HepG2 (cell line): ENCODE measurements at regions of chr1 and their contacts with region 1.

Region 1: DNA sequence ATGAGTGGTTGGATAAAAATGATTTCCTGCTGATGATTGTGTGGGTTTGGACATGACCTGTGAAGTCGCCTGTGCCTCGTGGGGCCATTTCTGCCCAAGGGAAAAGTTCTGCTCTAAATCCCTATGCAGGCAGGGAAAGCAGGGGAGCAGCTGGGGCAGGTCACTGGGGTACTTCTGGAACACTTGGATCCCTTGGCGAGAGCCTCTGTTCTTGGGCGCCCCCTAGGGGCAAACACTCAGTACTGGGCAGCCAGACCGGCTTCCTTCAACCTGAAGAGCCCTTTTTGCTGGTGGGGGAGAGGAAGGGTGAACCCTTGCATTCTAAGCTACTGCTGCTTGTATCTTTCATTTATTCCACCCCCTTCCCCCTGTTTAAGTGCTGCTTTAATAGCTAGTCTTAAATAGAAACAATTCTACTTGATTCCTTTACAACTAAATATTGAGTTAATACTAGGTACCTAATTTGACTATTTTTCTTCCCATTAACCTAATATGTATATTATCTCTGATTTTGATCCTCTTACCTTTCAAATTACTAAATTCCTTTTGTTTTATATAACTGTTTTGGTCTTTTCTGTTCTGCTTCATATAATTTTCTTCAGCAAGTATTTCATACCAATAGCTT is 5.1 kb upstream of the CLEC20A start:
- DNase-seq: peak; percentile 45
- ATAC-seq: peak; percentile 85
- H3K4me3 ChIP-seq: no peak overlapping the region
- H3K27ac ChIP-seq: no peak overlapping the region
- H3K4me1 ChIP-seq: peaks cover 13% of the 10 kb centered on the region; the same call in 1 of the 2 replicates
- H3K27me3 ChIP-seq: peaks cover 0 to 12% of the 10 kb centered on the region in 2 experiments; a peak in 3 of 5 replicates
- CTCF ChIP-seq: peak; percentile 82
- EP300 ChIP-seq: no peak
- POLR2A ChIP-seq: no peak
- RAD21 ChIP-seq: 0 out of 2 replicates have a peak, but pooled peaks have one; percentile 25

Region 2: GRCh38 chr1:178294654-178295053 is 207.2 kb before region 1 on chr1:
- CTCF ChIA-PET with region 1: interaction called, 4 read pairs
- POLR2A ChIA-PET with region 1: no interaction called
- in situ Hi-C with region 1: loop called (anchors 10 kb)
- intact Hi-C with region 1: no loop called
- DNase-seq: no peak
- ATAC-seq: peak; percentile 56
- H3K4me3 ChIP-seq: no peak overlapping the region
- H3K27ac ChIP-seq: no peak overlapping the region
- H3K4me1 ChIP-seq: no peaks in the 10 kb centered on the region
- H3K27me3 ChIP-seq: no peaks in the 10 kb centered on the region
- CTCF ChIP-seq: no peak
- EP300 ChIP-seq: no peak
- POLR2A ChIP-seq: no peak
- RAD21 ChIP-seq: no peak

Region 3: GRCh38 chr1:178300352-178300699 is 201.5 kb before region 1 on chr1:
- CTCF ChIA-PET with region 1: interaction called, 4 read pairs
- POLR2A ChIA-PET with region 1: no interaction called
- in situ Hi-C with region 1: loop called (anchors 10 kb)
- intact Hi-C with region 1: loop called (anchors 2 kb)
- DNase-seq: no peak
- ATAC-seq: no peak
- H3K4me3 ChIP-seq: no peak overlapping the region
- H3K27ac ChIP-seq: no peak overlapping the region
- H3K4me1 ChIP-seq: no peaks in the 10 kb centered on the region
- H3K27me3 ChIP-seq: no peaks in the 10 kb centered on the region
- CTCF ChIP-seq: no peak
- EP300 ChIP-seq: no peak
- POLR2A ChIP-seq: no peak
- RAD21 ChIP-seq: no peak

Region 4: DNA sequence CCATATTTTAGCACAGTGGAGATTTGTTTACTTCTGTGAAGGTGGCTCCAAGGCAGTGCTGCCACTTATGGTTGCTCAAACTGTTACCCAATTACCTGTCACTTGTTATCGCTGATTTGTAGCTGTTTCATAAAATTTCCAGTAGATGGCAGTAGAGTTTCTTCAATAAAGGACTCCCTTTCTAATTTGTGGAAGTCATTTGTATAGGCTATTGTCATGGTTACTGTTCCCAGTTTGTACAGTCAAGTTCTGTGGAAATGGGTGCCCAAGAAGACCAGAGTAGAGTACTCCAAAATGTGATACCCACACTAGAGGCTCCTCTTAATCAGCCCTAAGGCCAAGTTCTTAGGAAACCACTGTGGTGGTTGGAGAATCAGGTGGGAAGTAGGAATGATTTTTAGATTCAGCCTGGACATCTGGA is 191.1 kb before region 1 on chr1:
- CTCF ChIA-PET with region 1: interaction called, 7 read pairs
- POLR2A ChIA-PET with region 1: no interaction called
- in situ Hi-C with region 1: no loop called
- intact Hi-C with region 1: loop called (anchors 2 kb)
- DNase-seq: peak; percentile 77
- ATAC-seq: peak; percentile 83
- H3K4me3 ChIP-seq: no peak overlapping the region
- H3K27ac ChIP-seq: no peak overlapping the region
- H3K4me1 ChIP-seq: no peaks in the 10 kb centered on the region
- H3K27me3 ChIP-seq: no peaks in the 10 kb centered on the region
- CTCF ChIP-seq: peak; percentile 80
- EP300 ChIP-seq: no peak
- POLR2A ChIP-seq: no peak
- RAD21 ChIP-seq: peak; percentile 51; the same call in 1 of the 2 replicates